ENCODE measurements at regions of chr13 and their contacts with region 1.

Region 1: GRCh38 chr13:41315443-41316047 is 4.5 kb downstream of the NAA16 start:
- DNase-seq: no peak
- H3K4me3 ChIP-seq: no peak overlapping the region
- CTCF ChIP-seq: no peak

Region 2: DNA sequence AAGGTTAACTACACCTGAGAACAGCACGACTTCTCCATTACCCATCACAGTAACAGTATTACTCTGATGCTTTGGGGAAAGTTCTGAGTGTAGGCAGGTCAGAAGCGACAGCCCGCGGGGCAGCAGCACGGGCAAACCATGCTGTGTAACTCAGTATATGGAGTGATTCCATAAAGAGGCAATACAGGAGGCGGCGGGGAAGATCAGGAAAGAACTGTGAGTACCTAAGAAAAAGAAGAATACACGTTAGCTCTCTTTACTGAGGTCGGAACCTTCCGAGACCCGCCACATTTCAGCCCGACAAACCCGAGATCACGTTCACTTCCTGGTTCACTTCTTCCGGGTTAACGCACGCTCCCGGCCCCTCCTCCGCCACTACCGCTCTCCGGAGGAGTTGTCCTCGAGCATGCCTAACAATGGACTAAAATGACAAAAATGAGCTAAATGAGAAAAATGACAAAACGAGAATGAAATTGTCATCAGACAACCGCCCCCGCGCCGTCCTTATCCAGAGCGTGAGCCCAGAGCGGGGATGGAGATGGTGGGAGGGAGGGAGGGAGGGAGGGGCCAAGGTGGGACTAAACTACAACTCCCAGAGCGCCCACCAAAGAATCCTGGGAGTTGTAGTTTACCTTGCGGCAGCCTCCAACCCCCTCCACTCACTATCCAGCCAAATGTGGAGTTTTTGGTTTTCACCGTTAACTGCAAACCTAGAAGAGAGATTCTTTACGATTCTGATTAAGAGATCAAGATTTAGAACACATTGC is 52.1 kb before region 1 on chr13 and contains the start of gene MTRF1:
- in situ Hi-C with region 1: no loop called
- DNase-seq: peak; percentile 41
- H3K4me3 ChIP-seq: peak within 1 kb of the TSS; percentile 79
- CTCF ChIP-seq: no peak

Region 3: GRCh38 chr13:41352935-41353840 is 37.6 kb after region 1 on chr13:
- in situ Hi-C with region 1: no loop called
- DNase-seq: peak; percentile 44
- H3K4me3 ChIP-seq: no peak overlapping the region
- CTCF ChIP-seq: peak; percentile 73

Region 4: GRCh38 chr13:41370736-41371135 is 55.2 kb after region 1 on chr13:
- in situ Hi-C with region 1: loop called (anchors 5 kb)
- DNase-seq: no peak
- H3K4me3 ChIP-seq: no peak overlapping the region
- CTCF ChIP-seq: no peak

Measured in astrocyte of the cerebellum (primary cell).